ENCODE measurements at regions of chr2 and their contacts with region 1.

Region 1: GRCh38 chr2:109545828-109546713 is 67.7 kb downstream of the SEPTIN10 start:
- DNase-seq: no peak
- H3K4me3 ChIP-seq: no peak overlapping the region
- H3K27ac ChIP-seq: peak overlapping the region in 1 of 4 donors; percentile 23
- H3K4me1 ChIP-seq: peaks cover 0 to 24% (median 18%) of the 10 kb centered on the region in 4 donors
- H3K27me3 ChIP-seq: no peaks in the 10 kb centered on the region
- CTCF ChIP-seq: peak; percentile 91 to 97 (median 92)
- EP300 ChIP-seq: no peak
- POLR2A ChIP-seq: no peak

Region 2: GRCh38 chr2:109410039-109410815 is 135.8 kb before region 1 on chr2:
- intact Hi-C with region 1: no loop called
- DNase-seq: no peak
- H3K4me3 ChIP-seq: no peak overlapping the region
- H3K27ac ChIP-seq: no peak overlapping the region
- H3K4me1 ChIP-seq: peaks cover 0 to 7% (median 2%) of the 10 kb centered on the region in 4 donors
- H3K27me3 ChIP-seq: no peaks in the 10 kb centered on the region
- CTCF ChIP-seq: no peak
- EP300 ChIP-seq: no peak
- POLR2A ChIP-seq: no peak

Region 3: DNA sequence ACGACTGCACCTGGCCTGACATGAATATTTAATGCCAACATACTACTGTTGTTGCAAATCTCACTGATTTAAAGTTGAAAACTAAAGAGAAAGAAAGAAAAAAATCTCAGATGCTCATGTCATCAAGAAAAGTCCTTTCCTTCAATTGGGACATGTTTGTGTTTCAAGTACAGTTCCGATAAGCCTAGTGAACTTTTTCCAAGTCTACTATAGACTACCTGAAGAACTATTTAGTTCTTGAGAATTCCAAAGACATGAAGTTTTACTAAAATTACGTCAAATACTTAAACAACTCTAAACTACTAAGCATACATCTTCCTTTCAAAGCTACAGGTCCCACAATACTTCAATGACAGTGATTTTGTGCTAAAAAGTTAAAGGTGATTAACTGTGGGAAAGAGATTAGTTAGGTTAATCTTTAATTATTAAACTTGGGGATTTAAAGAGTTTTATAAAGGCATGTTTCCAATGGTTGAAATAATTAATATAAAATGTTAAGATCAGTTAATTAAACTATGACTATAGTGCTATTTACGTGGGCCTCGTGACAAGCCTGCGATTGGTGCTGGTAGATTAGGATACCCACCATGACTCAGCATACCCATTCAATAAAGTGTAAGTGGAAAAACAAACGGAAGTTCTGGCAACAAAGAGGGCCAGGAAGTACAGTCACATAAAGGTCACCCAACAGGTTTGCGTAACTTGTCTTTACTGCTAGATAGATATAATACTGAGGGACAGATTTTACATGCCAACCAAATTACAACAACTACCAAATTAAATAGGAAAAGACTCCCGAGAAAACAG is 12.2 kb after region 1 on chr2:
- intact Hi-C with region 1: no loop called
- DNase-seq: no peak
- H3K4me3 ChIP-seq: no peak overlapping the region
- H3K27ac ChIP-seq: no peak overlapping the region
- H3K4me1 ChIP-seq: peaks cover 0 to 9% (median 3%) of the 10 kb centered on the region in 4 donors
- H3K27me3 ChIP-seq: no peaks in the 10 kb centered on the region
- CTCF ChIP-seq: no peak
- EP300 ChIP-seq: no peak
- POLR2A ChIP-seq: no peak

Region 4: DNA sequence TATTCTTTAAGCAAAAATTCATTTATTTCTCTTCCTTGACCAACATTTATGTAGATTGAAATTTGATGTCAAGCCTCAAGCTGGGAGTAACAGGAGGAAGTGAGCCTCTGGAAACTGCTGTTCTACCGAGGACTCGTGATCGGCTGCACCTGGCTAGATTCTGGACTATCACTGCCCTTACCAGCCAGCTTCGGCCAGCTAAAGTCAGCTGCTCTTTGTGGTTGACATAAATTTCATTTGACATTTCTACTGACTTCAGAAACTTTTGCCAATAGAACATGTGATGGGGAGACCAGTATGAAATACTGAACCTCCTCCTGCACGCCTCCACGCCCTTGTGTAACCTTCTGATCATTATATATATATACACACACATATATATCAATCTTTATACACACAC is 173.8 kb after region 1 on chr2:
- intact Hi-C with region 1: loop called (anchors 2 kb)
- DNase-seq: peak; percentile 72
- H3K4me3 ChIP-seq: no peak overlapping the region
- H3K27ac ChIP-seq: no peak overlapping the region
- H3K4me1 ChIP-seq: peaks cover 0 to 12% (median 4%) of the 10 kb centered on the region in 4 donors
- H3K27me3 ChIP-seq: no peaks in the 10 kb centered on the region
- CTCF ChIP-seq: no peak
- EP300 ChIP-seq: no peak
- POLR2A ChIP-seq: no peak

Region 5: DNA sequence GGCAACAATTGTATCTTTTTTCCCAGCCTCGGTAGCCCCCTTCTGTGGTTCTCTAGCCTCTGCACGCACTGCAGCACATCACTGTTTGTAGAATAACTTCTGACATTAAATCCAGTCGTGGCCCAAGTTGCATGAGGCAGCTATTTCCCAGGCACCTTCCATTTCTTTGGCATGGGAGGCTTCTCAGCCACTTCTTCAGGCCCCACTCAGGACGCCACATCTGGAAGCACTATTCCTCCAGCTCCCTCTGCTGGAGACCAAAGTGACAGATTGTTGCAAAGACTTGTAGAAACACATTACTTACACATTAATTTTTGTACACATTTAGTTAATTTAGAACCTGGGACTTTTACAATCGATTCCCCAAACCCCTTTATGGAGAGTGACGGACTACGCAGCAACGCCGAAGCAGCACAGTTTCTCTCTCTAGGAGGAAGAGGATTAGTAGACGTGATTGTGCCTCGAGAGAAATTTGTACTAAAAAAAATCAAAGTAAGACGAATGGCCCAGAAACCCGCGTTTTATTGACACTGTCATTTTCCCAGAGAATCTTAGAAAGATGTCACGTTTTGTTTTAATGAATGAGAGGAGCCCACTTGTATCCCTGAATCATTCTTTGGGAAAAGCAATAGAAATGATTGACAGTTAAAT is 190.2 kb after region 1 on chr2:
- intact Hi-C with region 1: loop called (anchors 5 kb)
- DNase-seq: no peak
- H3K4me3 ChIP-seq: no peak overlapping the region
- H3K27ac ChIP-seq: no peak overlapping the region
- H3K4me1 ChIP-seq: peaks cover 0 to 6% (median 0%) of the 10 kb centered on the region in 4 donors
- H3K27me3 ChIP-seq: no peaks in the 10 kb centered on the region
- CTCF ChIP-seq: peak; percentile 64 to 68 (median 68)
- EP300 ChIP-seq: no peak
- POLR2A ChIP-seq: no peak

Measured in esophagus muscularis mucosa (tissue), 4 donors.